Astrocyte of the cerebellum (primary cell): ENCODE measurements at regions of chr12 and their contacts with region 1.

Region 1: DNA sequence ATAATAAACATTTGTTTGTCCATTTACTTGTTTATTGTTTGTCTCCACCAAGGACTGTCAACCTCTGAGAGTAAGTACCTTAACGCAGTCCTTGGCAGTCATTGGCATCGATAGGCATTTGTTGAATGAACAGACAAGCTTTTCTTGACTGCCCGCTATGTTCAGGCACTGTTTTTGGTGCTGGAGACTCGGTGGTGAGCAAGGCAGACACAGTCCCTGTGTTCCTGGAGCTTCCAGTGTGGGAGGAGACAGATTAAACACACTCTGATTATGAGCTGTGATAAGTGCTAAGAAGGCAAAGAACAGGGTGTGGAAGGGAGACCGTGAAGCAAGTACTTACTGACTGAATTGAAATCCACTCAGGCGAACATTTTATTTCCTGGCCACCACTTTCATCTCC is 1.2 kb downstream of the ATP6V0A2 start:
- DNase-seq: no peak
- H3K4me3 ChIP-seq: peak overlapping the region; percentile 85
- CTCF ChIP-seq: no peak

Region 2: DNA sequence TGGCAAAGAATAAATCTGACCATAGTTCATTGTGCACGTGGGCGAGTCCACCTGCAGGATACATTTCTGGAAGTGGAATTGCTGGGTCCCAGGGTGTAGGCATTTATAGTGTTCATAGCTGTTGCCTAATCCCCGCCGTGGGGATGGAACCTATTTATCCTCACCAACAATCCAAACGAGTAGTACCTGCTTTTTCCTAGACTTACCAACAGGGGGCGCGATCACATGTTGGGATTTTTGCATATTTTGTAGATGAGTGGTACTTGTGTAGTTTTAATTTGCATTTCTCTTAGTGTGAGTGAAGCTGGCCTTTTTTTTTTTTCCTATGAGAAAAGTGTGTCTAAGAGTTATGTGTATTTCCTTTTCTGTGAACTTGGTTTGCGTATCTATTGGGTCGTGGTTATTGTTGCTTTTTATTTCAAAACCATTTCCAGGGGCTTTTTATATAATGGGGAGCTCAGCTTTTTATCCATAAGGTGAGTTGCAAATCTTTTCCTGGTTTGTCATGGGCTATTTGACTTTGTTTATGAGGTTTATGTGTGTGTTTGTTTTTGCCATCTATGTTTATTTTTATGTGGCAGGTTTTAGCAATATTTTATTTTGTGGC is 192.0 kb after region 1 on chr12:
- in situ Hi-C with region 1: loop called (anchors 10 kb)
- DNase-seq: peak; percentile 60
- H3K4me3 ChIP-seq: no peak overlapping the region
- CTCF ChIP-seq: peak; percentile 72

Region 3: GRCh38 chr12:123983822-123984485 is 270.6 kb after region 1 on chr12:
- in situ Hi-C with region 1: loop called (anchors 10 kb)
- DNase-seq: peak; percentile 66
- H3K4me3 ChIP-seq: no peak overlapping the region
- CTCF ChIP-seq: peak; percentile 75